ENCODE measurements at regions of chr15 and their contacts with region 1.

Region 1: GRCh38 chr15:62742409-62743171 is 300.0 kb upstream of the TPM1 start:
- DNase-seq: peak; percentile 39 to 51
- H3K4me3 ChIP-seq: no peak overlapping the region
- H3K27ac ChIP-seq: peak overlapping the region; percentile 47; the same call in 1 of the 2 replicates
- H3K4me1 ChIP-seq: peaks cover 31% of the 10 kb centered on the region
- H3K27me3 ChIP-seq: no peaks in the 10 kb centered on the region
- CTCF ChIP-seq: peak; percentile 88

Region 2: DNA sequence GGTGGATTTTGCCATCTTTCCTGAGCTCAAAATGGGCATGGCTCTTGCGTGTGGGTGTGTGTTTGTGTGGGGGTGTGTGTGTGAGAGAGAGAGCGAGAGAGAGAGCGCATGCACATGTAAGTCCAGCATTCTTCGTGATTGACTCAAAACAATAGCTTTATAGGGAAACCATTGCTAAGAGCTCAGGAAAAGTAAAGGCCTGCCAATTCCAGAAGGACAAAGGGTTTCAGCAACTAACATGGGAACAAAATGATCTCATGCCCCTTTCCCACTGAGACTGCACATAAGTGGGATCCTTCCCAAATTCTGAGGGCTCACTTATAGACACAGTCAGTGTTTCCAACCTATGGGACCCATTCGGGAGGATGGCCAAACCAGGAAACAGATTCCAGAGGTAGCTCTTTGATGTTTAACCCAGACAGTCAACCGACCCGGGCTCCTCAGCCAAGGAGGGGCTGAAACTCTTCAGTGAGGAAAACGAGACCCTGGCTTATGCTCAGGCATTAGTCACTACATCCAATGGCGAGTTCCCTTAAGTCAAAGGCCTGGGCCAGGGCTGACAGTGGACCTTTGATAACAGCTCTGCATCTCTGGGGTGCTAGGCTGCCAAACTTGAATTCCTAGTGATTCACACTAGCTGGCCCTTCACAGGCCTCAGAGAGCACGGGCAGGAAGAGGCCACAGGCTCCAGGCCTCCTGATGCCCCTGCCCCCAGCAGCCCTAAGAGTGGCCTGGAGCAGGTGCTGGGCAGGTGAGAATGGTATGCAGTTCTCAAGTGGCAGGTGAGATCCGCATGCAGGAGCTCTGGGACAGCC is 272.5 kb before region 1 on chr15:
- CTCF ChIA-PET with region 1: no interaction called
- POLR2A ChIA-PET with region 1: no interaction called
- intact Hi-C with region 1: loop called (anchors 10 kb)
- DNase-seq: peak; percentile 54 to 64
- H3K4me3 ChIP-seq: no peak overlapping the region
- H3K27ac ChIP-seq: no peak overlapping the region
- H3K4me1 ChIP-seq: peaks cover 12% of the 10 kb centered on the region
- H3K27me3 ChIP-seq: no peaks in the 10 kb centered on the region
- CTCF ChIP-seq: no peak

Region 3: DNA sequence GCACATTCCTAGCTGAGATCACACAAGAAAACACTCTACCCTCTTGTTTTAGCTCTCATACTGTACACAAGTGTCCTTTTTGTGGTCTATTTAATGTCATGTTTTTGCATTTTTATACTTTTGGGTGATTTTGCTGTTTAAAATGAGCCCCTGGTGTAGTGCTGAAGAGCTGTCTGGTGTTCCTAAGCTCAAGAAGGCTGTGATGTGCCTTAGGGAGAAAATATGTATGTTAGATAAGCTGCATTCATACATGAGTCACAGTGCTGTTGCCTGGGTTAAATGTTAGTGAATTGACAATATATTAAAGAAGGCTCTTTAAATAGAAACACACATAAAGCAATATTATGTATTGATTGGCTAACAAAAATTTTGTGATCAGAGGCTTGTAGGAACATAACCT is 190.1 kb before region 1 on chr15:
- CTCF ChIA-PET with region 1: no interaction called
- POLR2A ChIA-PET with region 1: interaction called, 11 read pairs
- intact Hi-C with region 1: no loop called
- DNase-seq: no peak
- H3K4me3 ChIP-seq: no peak overlapping the region
- H3K27ac ChIP-seq: no peak overlapping the region
- H3K4me1 ChIP-seq: 0 out of 2 replicates have a peak, but pooled peaks cover 8% of the 10 kb centered on the region
- H3K27me3 ChIP-seq: no peaks in the 10 kb centered on the region
- CTCF ChIP-seq: no peak

Region 4: DNA sequence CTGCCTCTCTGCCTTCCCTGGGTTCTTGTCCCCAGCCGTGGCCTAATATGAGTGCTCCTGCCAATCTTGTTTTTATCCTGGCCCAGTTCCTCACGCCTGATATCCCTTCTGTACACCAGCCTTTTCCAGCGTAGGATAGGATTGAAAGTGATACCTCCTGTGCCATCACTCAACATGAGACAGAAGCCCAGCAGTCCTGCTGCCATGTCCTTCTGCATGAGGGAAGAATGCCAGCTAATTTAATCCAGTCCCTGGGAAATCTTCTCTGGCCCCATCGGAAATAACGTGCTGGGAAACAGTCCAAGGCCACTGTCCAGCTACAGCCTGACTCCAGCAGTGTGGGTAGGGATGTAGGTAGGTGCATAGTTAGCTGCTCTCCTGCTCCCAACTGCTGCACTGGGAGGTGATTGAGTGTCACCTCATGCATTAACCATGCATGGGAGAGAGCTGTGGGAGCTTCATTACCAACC is 207.9 kb after region 1 on chr15:
- CTCF ChIA-PET with region 1: no interaction called
- POLR2A ChIA-PET with region 1: no interaction called
- intact Hi-C with region 1: no loop called
- DNase-seq: no peak
- H3K4me3 ChIP-seq: no peak overlapping the region
- H3K27ac ChIP-seq: no peak overlapping the region
- H3K4me1 ChIP-seq: no peaks in the 10 kb centered on the region
- H3K27me3 ChIP-seq: no peaks in the 10 kb centered on the region
- CTCF ChIP-seq: no peak